IMR-90 (cell line): ENCODE measurements at regions of chr15 and their contacts with region 1.

Region 1: DNA sequence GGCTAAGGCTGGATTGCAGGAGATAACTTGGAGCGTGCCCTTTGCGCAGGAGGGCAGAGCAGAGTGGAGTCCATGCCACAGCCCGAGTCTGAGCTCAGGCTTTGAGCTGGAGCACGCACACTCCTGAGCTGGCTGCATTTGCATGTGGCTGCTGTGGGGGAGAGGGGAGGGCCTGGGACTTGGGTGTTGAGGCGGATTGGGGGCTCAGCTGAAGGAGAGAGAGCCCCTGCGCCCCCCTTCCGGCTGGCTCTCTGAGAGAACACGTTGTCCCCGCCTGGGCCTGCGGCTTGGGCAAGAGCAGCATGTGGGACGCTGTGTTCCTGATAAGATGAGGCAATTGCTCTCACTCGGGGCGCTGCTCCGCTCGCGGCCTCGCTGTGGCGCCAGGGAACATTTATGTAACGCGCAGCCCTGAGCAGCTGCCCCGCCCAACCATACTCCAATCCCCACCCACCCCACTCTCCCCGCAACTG is 39.1 kb downstream of the KLF13 start:
- DNase-seq: peak; percentile 72
- ATAC-seq: peak; percentile 95
- H3K4me3 ChIP-seq: no peak overlapping the region
- H3K27ac ChIP-seq: 0 out of 2 replicates have a peak overlapping the region, but pooled peaks have one; percentile 13
- H3K4me1 ChIP-seq: peaks cover 14% of the 10 kb centered on the region
- H3K27me3 ChIP-seq: no peaks in the 10 kb centered on the region
- CTCF ChIP-seq: peak; percentile 45
- POLR2A ChIP-seq: no peak
- RAD21 ChIP-seq: peak; percentile 51

Region 2: DNA sequence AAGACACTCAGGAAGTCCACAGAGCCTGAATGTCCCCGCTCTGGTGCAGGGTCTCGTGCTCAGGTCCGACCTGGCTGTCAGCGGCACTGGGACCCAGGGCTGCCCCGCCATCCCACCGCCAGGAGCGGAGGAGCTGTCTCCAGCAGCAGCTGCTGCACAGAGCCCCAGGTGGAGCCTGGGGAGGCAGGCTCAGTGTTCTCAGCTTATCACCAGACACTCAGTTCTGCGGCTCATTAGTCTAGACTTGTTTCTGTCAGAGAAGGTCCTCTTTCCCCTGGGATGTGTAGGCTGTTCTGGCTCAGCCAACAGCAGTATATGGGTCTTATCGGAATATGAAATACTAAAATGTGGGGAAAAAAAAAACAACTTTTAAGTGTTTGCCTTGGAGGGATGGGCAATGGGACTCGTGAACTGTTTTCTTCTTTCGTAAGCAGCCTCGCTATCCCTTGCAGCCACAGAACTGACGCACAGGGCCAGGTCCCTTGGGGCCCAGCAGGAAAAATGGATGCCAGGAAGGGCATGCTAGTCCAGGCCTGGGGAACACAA is 36.9 kb after region 1 on chr15:
- CTCF ChIA-PET with region 1: no interaction called
- POLR2A ChIA-PET with region 1: no interaction called
- dilution Hi-C with region 1: no loop called
- in situ Hi-C with region 1: no loop called
- intact Hi-C with region 1: no loop called
- DNase-seq: peak; percentile 10
- ATAC-seq: no peak
- H3K4me3 ChIP-seq: no peak overlapping the region
- H3K27ac ChIP-seq: no peak overlapping the region
- H3K4me1 ChIP-seq: peaks cover 6% of the 10 kb centered on the region; the same call in 1 of the 2 replicates
- H3K27me3 ChIP-seq: no peaks in the 10 kb centered on the region
- CTCF ChIP-seq: no peak
- POLR2A ChIP-seq: no peak
- RAD21 ChIP-seq: no peak

Region 3: GRCh38 chr15:31435261-31435911 is 69.7 kb after region 1 on chr15:
- CTCF ChIA-PET with region 1: no interaction called
- POLR2A ChIA-PET with region 1: no interaction called
- dilution Hi-C with region 1: no loop called
- in situ Hi-C with region 1: no loop called
- intact Hi-C with region 1: loop called (anchors 1 kb)
- DNase-seq: peak; percentile 72
- ATAC-seq: peak; percentile 85
- H3K4me3 ChIP-seq: no peak overlapping the region
- H3K27ac ChIP-seq: peak overlapping the region; percentile 72
- H3K4me1 ChIP-seq: peaks cover 15% of the 10 kb centered on the region
- H3K27me3 ChIP-seq: no peaks in the 10 kb centered on the region
- CTCF ChIP-seq: peak; percentile 77
- POLR2A ChIP-seq: no peak
- RAD21 ChIP-seq: peak; percentile 72

Region 4: GRCh38 chr15:31472636-31473384 is 107.1 kb after region 1 on chr15:
- CTCF ChIA-PET with region 1: no interaction called
- POLR2A ChIA-PET with region 1: no interaction called
- dilution Hi-C with region 1: no loop called
- in situ Hi-C with region 1: no loop called
- intact Hi-C with region 1: loop called (anchors 5 kb)
- DNase-seq: peak; percentile 64
- ATAC-seq: peak; percentile 43
- H3K4me3 ChIP-seq: no peak overlapping the region
- H3K27ac ChIP-seq: peak overlapping the region; percentile 39
- H3K4me1 ChIP-seq: peaks cover 14% of the 10 kb centered on the region
- H3K27me3 ChIP-seq: no peaks in the 10 kb centered on the region
- CTCF ChIP-seq: no peak
- POLR2A ChIP-seq: no peak
- RAD21 ChIP-seq: no peak